ENCODE measurements at regions of chr12 and their contacts with region 1.

Region 1: DNA sequence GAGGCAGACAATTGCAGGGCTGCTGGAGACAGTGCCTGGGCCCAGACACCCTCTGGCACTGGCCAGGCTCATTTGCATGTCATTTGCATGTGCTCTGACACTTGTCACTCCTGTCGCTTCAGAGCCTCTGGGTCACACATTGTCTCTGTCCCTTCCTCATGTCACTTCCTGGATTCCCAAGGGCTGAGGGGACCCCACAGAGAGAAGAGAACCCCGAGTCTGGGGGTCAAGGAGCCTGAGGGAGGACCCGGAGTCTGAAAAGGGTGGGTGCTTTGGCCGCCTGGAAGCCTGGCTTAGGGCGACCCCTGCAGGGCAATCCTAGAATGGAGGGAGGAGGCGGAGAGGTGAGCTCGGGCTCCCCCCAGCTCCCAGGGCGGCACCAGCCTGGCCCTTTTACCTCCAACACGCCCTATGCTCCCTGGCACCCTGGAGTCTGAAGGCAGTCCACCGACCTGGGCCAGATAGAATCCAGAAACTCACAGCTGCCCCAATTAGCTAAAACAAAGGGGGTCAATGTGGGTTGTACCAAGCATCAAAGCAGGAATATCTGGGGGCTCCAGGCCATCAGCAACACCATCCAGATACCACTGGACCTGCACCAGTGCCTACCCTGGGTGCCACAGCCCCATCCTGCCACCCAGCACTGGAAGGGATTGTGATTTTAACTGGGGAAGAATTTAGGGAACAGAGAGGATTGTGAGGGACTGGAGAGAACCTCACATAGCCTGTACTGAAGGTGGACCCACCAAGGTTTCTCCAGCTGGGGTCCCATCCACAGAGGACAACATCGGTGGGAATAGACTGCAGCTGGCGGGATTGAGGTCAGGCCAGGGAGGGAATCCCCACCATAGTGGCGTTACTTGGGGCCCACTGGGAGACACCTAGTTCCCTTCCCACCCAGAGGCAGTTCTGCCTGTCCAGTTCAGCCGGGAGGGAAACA is 21.8 kb upstream of the KRT78 start:
- DNase-seq: no peak
- H3K4me3 ChIP-seq: no peak overlapping the region
- H3K27ac ChIP-seq: peak overlapping the region; percentile 75
- H3K27me3 ChIP-seq: no peaks in the 10 kb centered on the region
- CTCF ChIP-seq: peak; percentile 72

Region 2: GRCh38 chr12:52372216-52373154 is 498.1 kb before region 1 on chr12:
- CTCF ChIA-PET with region 1: interaction called, 33 read pairs
- POLR2A ChIA-PET with region 1: no interaction called
- DNase-seq: peak; percentile 72
- H3K4me3 ChIP-seq: no peak overlapping the region
- H3K27ac ChIP-seq: no peak overlapping the region
- H3K27me3 ChIP-seq: peaks cover 35% of the 10 kb centered on the region
- CTCF ChIP-seq: peak; percentile 89

Region 3: GRCh38 chr12:52582971-52583456 is 287.6 kb before region 1 on chr12:
- CTCF ChIA-PET with region 1: interaction called, 42 read pairs
- POLR2A ChIA-PET with region 1: no interaction called
- DNase-seq: peak; percentile 3
- H3K4me3 ChIP-seq: no peak overlapping the region
- H3K27ac ChIP-seq: no peak overlapping the region
- H3K27me3 ChIP-seq: peaks cover 37% of the 10 kb centered on the region
- CTCF ChIP-seq: peak; percentile 85

Region 4: DNA sequence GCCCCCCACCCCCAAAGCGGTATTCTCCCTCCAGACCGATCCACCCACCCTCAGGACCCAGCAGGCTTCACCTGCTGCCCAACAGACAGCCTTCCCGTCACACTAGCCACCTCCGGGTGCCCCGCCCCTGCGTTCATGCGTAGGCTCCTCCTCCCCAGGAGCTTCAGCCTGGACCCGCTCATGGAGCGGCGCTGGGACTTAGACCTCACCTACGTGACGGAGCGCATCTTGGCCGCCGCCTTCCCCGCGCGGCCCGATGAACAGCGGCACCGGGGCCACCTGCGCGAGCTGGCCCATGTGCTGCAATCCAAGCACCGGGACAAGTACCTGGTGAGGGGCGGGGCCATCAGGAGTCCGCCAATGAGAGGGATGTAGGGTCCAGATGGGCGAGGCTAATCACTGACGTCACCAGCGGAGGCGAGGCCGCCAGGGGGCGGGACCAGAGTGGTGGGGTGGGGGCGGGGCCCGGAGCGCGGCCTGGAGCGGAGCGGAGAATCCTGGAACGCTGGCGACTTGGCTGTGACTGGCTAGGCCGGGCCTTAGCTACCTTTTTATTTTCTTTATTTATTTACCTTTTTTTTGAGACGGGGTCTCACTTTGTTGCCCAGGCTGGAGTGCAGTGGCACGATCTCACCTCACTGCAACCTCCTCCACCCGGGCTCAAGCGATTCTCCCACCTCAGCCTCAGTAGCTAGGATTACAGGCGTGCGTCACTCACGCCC is 183.7 kb after region 1 on chr12:
- CTCF ChIA-PET with region 1: no interaction called
- POLR2A ChIA-PET with region 1: no interaction called
- DNase-seq: no peak
- H3K4me3 ChIP-seq: peak overlapping the region; percentile 47
- H3K27ac ChIP-seq: peak overlapping the region; percentile 47
- H3K27me3 ChIP-seq: no peaks in the 10 kb centered on the region
- CTCF ChIP-seq: no peak